ENCODE measurements at regions of chr12 and their contacts with region 1.

Region 1: GRCh38 chr12:123502163-123502704 is 31.3 kb downstream of the RILPL1 start:
- DNase-seq: no peak
- ATAC-seq: no peak
- H3K4me3 ChIP-seq: no peak overlapping the region
- H3K4me3 Mint-ChIP-seq: no peak overlapping the region
- H3K27ac ChIP-seq: no peak overlapping the region
- H3K27ac Mint-ChIP-seq: no peak overlapping the region
- H3K4me1 ChIP-seq: no peaks in the 10 kb centered on the region
- H3K4me1 Mint-ChIP-seq: peaks cover 0 to 2% (median 0%) of the 10 kb centered on the region in 3 donors
- H3K27me3 ChIP-seq: no peaks in the 10 kb centered on the region
- H3K27me3 Mint-ChIP-seq: no peaks in the 10 kb centered on the region

Region 2: GRCh38 chr12:122740351-122740750 is 761.9 kb before region 1 on chr12:
- CTCF ChIA-PET with region 1: no interaction called
- POLR2A ChIA-PET with region 1: no interaction called
- DNase-seq: no peak
- ATAC-seq: no peak
- H3K4me3 ChIP-seq: no peak overlapping the region
- H3K4me3 Mint-ChIP-seq: no peak overlapping the region
- H3K27ac ChIP-seq: no peak overlapping the region
- H3K27ac Mint-ChIP-seq: no peak overlapping the region
- H3K4me1 ChIP-seq: no peaks in the 10 kb centered on the region
- H3K4me1 Mint-ChIP-seq: peaks cover 0 to 2% (median 0%) of the 10 kb centered on the region in 3 donors
- H3K27me3 ChIP-seq: peaks cover 0 to 1% of the 10 kb centered on the region in 2 experiments
- H3K27me3 Mint-ChIP-seq: no peaks in the 10 kb centered on the region

Region 3: DNA sequence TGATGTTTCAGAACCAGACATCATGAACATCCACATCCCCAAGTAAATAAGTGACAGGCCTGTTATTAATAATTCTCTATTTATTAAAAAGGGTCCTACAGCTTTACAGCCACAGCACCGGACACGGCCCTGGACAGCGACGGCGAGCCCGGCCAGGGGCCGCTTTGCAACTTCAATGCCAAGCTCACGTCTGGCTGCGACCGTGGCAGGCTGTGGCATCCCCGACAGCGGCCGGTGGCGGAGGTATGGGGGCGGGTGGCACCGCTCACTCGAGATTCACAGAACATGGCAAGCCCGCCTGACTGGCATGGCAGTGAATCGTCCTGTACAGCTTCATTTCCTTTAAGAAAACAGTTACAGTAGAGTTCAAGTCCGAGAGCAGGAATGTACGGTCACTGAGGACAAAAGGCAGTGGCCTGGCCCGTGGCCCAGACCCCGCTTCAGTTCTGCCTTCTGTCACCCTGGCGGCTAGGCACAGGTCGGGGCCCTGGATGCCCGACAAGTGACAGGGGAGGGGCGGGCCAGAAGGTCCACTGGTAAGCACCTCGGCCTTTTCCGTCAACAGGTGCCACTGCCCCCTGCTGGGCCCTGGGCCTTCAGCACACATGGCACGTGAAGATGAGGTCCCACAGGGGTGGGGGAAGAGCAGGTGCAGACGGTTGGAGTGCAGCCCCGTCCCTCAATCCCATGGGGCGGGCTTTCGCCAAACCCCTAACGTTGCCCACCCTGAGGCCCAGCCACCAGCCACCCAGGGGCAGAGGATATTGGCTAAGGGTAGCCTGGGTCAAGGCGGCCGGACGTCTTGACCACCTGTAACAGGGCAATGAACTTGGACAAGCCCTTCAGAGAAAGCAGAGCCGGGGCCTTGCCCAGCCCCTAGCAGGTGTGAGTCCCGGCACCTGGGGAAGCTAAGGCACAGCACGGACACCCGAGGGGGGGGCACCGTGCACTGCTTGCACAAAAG is 636.7 kb before region 1 on chr12:
- CTCF ChIA-PET with region 1: no interaction called
- POLR2A ChIA-PET with region 1: no interaction called
- DNase-seq: peak in 11 of 35 experiments; percentile 27 to 48 (median 36)
- ATAC-seq: peak in 1 of 4 experiments; percentile 25
- H3K4me3 ChIP-seq: no peak overlapping the region
- H3K4me3 Mint-ChIP-seq: no peak overlapping the region
- H3K27ac ChIP-seq: no peak overlapping the region
- H3K27ac Mint-ChIP-seq: no peak overlapping the region
- H3K4me1 ChIP-seq: peaks cover under 1 to 13% of the 10 kb centered on the region in 2 experiments
- H3K4me1 Mint-ChIP-seq: peaks cover 9 to 29% (median 21%) of the 10 kb centered on the region in 3 donors
- H3K27me3 ChIP-seq: no peaks in the 10 kb centered on the region
- H3K27me3 Mint-ChIP-seq: no peaks in the 10 kb centered on the region

Region 4: DNA sequence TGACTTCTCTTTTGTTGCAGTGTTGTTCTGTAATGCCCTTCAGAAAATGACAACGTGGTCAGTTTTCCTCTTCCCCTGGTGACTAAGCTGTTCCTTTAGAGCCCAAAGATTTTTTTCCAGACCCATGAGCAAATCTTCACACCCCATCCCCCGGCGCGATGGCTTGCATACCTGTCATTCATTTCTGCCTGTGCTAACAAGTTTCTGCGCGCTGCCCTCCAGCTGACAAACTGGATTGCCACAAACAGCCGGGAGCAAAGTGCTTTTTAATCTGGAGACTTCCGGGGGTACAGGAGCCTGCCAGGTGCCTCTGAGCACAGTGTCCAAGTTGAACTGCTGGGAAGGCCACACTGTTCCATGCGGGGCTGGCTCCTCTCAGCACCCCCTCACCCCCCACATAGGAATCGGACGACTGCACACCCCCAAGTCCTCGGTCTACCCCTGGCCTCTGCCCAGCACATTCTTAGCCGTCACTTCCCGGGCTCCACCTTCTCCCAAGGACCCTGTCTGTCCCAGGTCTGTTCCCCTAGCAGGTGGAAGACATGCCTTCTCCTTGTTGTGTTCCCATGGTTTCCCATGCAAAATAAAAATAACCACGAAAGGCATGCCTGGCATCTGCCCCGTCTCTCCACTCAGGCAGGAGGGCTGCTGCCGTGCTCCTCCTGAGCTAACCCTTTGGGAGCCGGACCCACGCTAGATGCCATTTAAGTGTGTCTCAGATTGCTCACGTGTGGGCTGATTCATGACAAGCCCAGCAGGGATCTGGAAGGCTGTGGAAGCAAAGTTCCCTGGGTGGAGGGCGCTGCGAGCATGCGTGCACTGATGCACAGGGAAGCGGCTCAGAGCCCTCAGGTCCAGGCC is 17.1 kb after region 1 on chr12:
- CTCF ChIA-PET with region 1: no interaction called
- POLR2A ChIA-PET with region 1: interaction called in 1 of 2 experiments, 13 read pairs
- DNase-seq: no peak
- ATAC-seq: no peak
- H3K4me3 ChIP-seq: no peak overlapping the region
- H3K4me3 Mint-ChIP-seq: no peak overlapping the region
- H3K27ac ChIP-seq: no peak overlapping the region
- H3K27ac Mint-ChIP-seq: no peak overlapping the region
- H3K4me1 ChIP-seq: no peaks in the 10 kb centered on the region
- H3K4me1 Mint-ChIP-seq: no peaks in the 10 kb centered on the region
- H3K27me3 ChIP-seq: no peaks in the 10 kb centered on the region
- H3K27me3 Mint-ChIP-seq: no peaks in the 10 kb centered on the region